ENCODE measurements at regions of chr3 and their contacts with region 1.

Region 1: GRCh38 chr3:120095226-120095978 is 1.2 kb upstream of the GSK3B start:
- DNase-seq: peak; percentile 93
- H3K4me3 ChIP-seq: peak overlapping the region; percentile 74 to 82 (median 78)
- H3K27ac ChIP-seq: peak overlapping the region; percentile 99
- H3K4me1 ChIP-seq: peaks cover 24% of the 10 kb centered on the region
- H3K27me3 ChIP-seq: no peaks in the 10 kb centered on the region
- CTCF ChIP-seq: no peak

Region 2: GRCh38 chr3:119918992-119919933 is 176.1 kb before region 1 on chr3:
- CTCF ChIA-PET with region 1: no interaction called
- dilution Hi-C with region 1: no loop called
- in situ Hi-C with region 1: no loop called
- intact Hi-C with region 1: loop called (anchors 5 kb)
- DNase-seq: no peak
- H3K4me3 ChIP-seq: no peak overlapping the region
- H3K27ac ChIP-seq: no peak overlapping the region
- H3K4me1 ChIP-seq: no peaks in the 10 kb centered on the region
- H3K27me3 ChIP-seq: no peaks in the 10 kb centered on the region
- CTCF ChIP-seq: peak in 1 of 2 donors; percentile 14

Region 3: GRCh38 chr3:120081719-120082118 is 13.7 kb before region 1 on chr3:
- CTCF ChIA-PET with region 1: no interaction called
- dilution Hi-C with region 1: no loop called
- in situ Hi-C with region 1: no loop called
- intact Hi-C with region 1: no loop called
- DNase-seq: no peak
- H3K4me3 ChIP-seq: no peak overlapping the region
- H3K27ac ChIP-seq: no peak overlapping the region
- H3K4me1 ChIP-seq: peaks cover 6% of the 10 kb centered on the region
- H3K27me3 ChIP-seq: no peaks in the 10 kb centered on the region
- CTCF ChIP-seq: no peak

Region 4: GRCh38 chr3:120113128-120114116 is 18.0 kb after region 1 on chr3:
- CTCF ChIA-PET with region 1: no interaction called
- dilution Hi-C with region 1: no loop called
- in situ Hi-C with region 1: no loop called
- intact Hi-C with region 1: loop called (anchors 1 kb)
- DNase-seq: peak; percentile 99
- H3K4me3 ChIP-seq: no peak overlapping the region
- H3K27ac ChIP-seq: peak overlapping the region; percentile 89
- H3K4me1 ChIP-seq: peaks cover 46% of the 10 kb centered on the region
- H3K27me3 ChIP-seq: no peaks in the 10 kb centered on the region
- CTCF ChIP-seq: no peak

Region 5: DNA sequence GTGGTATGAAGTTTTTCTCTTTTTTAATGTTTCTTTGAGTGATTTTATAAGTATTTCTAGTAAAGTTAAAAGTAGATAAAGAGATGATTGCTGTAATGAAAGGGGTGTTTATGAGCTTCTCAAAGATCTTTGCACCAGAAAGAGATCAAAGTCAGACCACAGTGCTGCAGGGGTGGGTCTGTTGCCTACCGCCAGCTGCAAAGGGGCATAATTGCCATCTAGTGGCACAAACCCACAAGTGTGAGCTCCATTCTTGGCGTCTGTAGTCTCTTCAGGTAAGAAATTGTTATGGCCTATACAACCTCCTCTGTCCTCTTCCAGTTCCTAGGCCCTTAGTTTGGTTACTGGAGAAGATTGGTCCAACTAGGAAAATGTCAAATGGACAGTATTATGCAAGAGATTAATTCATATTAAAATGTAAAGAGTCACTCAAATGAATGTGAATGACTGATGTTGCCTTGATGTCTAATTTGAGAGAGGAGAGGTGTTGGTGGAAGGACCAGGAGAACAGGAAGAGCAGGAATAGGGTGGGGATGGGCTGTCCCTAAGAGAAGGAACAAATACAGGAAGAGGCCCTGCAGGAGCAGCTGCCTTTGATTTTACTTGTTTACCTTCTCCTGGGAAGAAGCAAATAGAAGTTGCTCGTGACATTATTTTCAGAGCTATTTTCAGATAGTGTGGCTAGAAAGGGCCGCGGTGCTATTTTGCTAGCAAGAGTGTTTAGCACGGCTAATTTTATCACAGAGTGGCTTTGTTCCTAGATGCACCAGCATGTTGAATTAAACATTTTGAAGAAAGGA is 51.9 kb after region 1 on chr3:
- CTCF ChIA-PET with region 1: no interaction called
- dilution Hi-C with region 1: loop called (anchors 5 kb)
- in situ Hi-C with region 1: loop called (anchors 5 kb)
- intact Hi-C with region 1: loop called (anchors 1 kb)
- DNase-seq: peak; percentile 61
- H3K4me3 ChIP-seq: no peak overlapping the region
- H3K27ac ChIP-seq: peak overlapping the region; percentile 96
- H3K4me1 ChIP-seq: peaks cover 58% of the 10 kb centered on the region
- H3K27me3 ChIP-seq: no peaks in the 10 kb centered on the region
- CTCF ChIP-seq: peak; percentile 33 to 46

Region 6: DNA sequence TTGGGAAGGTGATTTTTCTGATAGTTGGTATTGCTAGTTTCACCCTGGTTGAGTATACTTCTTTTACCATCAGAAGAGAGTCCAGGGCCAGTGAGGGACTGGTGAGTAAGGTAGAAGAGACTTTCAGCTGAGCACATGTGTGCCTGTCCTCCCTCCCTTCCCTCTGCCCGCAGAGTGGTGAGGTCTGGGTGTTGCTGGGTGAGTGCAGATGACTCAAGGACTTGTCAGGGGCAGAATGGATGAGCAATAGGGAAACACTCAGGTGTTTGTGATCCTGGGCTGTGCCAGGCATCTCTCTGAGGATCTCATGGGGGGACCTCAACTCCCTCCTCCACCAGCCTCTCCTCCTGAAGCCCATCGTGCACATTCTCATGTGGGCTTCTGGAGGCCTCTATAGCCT is 74.8 kb after region 1 on chr3:
- CTCF ChIA-PET with region 1: interaction called, 3 read pairs
- dilution Hi-C with region 1: loop called (anchors 5 kb)
- in situ Hi-C with region 1: loop called in 1 of 2 experiments (anchors 5 kb)
- intact Hi-C with region 1: loop called (anchors 2 kb)
- DNase-seq: peak; percentile 99
- H3K4me3 ChIP-seq: no peak overlapping the region
- H3K27ac ChIP-seq: peak overlapping the region; percentile 87
- H3K4me1 ChIP-seq: peaks cover 37% of the 10 kb centered on the region
- H3K27me3 ChIP-seq: no peaks in the 10 kb centered on the region
- CTCF ChIP-seq: no peak

Region 7: DNA sequence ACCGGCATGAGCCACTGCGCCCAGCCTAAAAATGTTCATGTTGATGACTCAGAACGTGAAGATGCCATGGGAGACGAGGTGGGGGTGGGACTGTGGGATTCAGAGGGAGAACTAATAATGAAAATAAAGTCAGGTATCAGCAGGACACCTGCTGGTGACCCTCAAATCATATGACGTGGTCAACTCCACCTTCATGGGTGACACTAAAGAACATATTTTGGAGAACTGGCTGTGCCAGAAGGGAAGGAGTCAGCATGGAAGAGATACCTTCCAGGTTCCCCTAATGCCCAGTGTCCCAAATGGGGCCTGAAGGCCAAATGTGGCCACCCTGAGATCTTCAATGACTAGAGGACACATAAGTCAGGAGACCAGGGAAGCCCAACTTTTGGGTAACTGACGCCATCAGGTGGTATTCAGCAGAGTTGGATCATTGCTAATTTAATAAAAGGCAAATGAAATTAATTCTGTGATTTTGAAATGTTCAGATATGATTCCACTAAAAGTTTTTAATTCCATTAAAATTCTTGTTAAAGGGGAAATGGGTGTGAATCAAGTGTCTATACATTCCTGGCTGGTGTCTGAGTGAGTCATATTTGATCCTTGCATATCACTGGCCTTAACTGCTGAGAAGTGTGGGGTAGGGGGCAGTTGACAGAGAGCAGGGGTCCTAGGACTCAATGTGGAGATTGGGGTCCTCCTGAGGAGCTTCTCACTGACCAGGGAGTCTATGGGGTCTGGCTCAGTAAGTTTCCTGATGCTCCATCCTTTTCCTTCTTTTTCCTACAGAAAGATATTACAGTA is 87.5 kb after region 1 on chr3:
- CTCF ChIA-PET with region 1: interaction called, 3 read pairs
- dilution Hi-C with region 1: loop called (anchors 5 kb)
- in situ Hi-C with region 1: no loop called
- intact Hi-C with region 1: loop called (anchors 1 kb)
- DNase-seq: peak; percentile 60
- H3K4me3 ChIP-seq: no peak overlapping the region
- H3K27ac ChIP-seq: no peak overlapping the region
- H3K4me1 ChIP-seq: peaks cover 31% of the 10 kb centered on the region
- H3K27me3 ChIP-seq: no peaks in the 10 kb centered on the region
- CTCF ChIP-seq: peak; percentile 50 to 55

Region 8: GRCh38 chr3:120227710-120228347 is 132.4 kb after region 1 on chr3:
- CTCF ChIA-PET with region 1: no interaction called
- dilution Hi-C with region 1: no loop called
- in situ Hi-C with region 1: no loop called
- intact Hi-C with region 1: no loop called
- DNase-seq: no peak
- H3K4me3 ChIP-seq: no peak overlapping the region
- H3K27ac ChIP-seq: no peak overlapping the region
- H3K4me1 ChIP-seq: no peaks in the 10 kb centered on the region
- H3K27me3 ChIP-seq: no peaks in the 10 kb centered on the region
- CTCF ChIP-seq: no peak

Measured in mammary epithelial cell (primary cell).